Activated CD4-positive, alpha-beta T cell treated with anti-CD3 and anti-CD28 coated beads for 36 hours (primary cell): ENCODE measurements at regions of chr17 and their contacts with region 1.

Region 1: GRCh38 chr17:76578344-76578979 is 7.2 kb downstream of the ST6GALNAC2 start:
- DNase-seq: no peak
- ATAC-seq: no peak
- H3K4me3 Mint-ChIP-seq: no peak overlapping the region
- H3K27ac Mint-ChIP-seq: no peak overlapping the region
- H3K4me1 Mint-ChIP-seq: peaks cover 6% of the 10 kb centered on the region
- H3K27me3 Mint-ChIP-seq: peaks cover 2% of the 10 kb centered on the region

Region 2: GRCh38 chr17:75749545-75750389 is 828.7 kb before region 1 on chr17:
- CTCF ChIA-PET with region 1: no interaction called
- POLR2A ChIA-PET with region 1: no interaction called
- intact Hi-C with region 1: no loop called
- DNase-seq: peak; percentile 95
- ATAC-seq: peak; percentile 75
- H3K4me3 Mint-ChIP-seq: no peak overlapping the region
- H3K27ac Mint-ChIP-seq: no peak overlapping the region
- H3K4me1 Mint-ChIP-seq: peaks cover 18% of the 10 kb centered on the region
- H3K27me3 Mint-ChIP-seq: no peaks in the 10 kb centered on the region

Region 3: DNA sequence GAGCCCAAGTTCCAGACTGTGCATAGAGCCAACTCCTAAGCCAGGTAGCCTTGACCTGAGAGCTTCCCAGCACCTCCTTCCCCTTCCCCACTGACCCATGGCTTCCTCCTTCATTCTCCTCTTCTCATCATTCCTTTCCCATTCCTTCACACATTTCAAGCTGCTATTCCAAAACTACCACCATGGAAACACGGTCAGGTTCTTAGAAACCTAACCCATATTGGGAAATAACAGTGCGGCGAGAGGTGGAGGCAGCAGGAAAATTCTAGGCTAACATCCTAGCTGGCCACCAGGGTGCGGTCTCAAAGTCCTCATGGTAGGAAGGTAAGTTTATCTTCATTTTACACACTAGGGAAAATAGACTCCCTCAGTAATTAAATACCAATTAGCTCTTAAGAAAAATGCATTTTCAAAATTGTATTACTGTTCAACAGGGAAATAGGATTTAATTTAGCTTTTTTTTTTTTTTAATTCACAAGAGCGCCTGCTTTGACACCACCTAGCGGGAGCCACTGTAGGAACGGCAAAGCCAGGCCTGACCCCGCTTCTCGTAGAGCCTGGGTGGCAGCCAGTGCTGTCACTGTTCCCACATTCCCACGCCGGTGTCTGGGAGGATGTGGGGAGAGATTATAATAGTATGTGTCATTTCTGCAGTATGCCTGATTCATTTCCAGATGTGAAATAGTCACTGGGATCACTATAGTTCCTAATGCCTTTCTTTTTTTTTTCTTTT is 208.0 kb before region 1 on chr17:
- CTCF ChIA-PET with region 1: no interaction called
- POLR2A ChIA-PET with region 1: no interaction called
- intact Hi-C with region 1: no loop called
- DNase-seq: peak; percentile 35
- ATAC-seq: no peak
- H3K4me3 Mint-ChIP-seq: no peak overlapping the region
- H3K27ac Mint-ChIP-seq: no peak overlapping the region
- H3K4me1 Mint-ChIP-seq: peaks cover 4% of the 10 kb centered on the region
- H3K27me3 Mint-ChIP-seq: no peaks in the 10 kb centered on the region

Region 4: GRCh38 chr17:76473541-76473985 is 104.9 kb before region 1 on chr17:
- CTCF ChIA-PET with region 1: no interaction called
- POLR2A ChIA-PET with region 1: no interaction called
- intact Hi-C with region 1: no loop called
- DNase-seq: peak; percentile 42
- ATAC-seq: no peak
- H3K4me3 Mint-ChIP-seq: no peak overlapping the region
- H3K27ac Mint-ChIP-seq: no peak overlapping the region
- H3K4me1 Mint-ChIP-seq: no peaks in the 10 kb centered on the region
- H3K27me3 Mint-ChIP-seq: no peaks in the 10 kb centered on the region

Region 5: DNA sequence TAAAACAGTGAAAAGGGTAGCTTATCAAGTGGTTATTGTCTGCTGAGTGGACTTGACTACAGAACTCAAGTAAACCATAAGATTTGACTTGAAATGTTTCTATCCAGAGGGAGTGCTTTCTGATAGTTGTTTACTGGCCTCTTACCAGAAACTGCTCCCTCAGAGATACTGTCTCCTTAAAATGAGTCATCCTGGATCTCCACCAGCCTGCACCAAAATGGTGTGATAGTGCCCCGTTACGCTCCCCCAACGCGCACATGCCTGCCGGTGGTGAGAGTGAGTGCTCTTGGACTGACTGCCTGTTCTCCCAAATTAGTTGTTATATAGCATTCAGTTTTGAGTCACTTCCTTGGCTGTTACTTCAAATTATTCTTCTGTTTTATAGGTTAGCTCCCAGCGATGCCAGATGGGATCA is 15.7 kb before region 1 on chr17:
- CTCF ChIA-PET with region 1: interaction called, 3 read pairs
- POLR2A ChIA-PET with region 1: interaction called, 17 read pairs
- intact Hi-C with region 1: no loop called
- DNase-seq: peak; percentile 55
- ATAC-seq: peak; percentile 31
- H3K4me3 Mint-ChIP-seq: no peak overlapping the region
- H3K27ac Mint-ChIP-seq: peak overlapping the region; percentile 38
- H3K4me1 Mint-ChIP-seq: peaks cover 54% of the 10 kb centered on the region
- H3K27me3 Mint-ChIP-seq: no peaks in the 10 kb centered on the region